ENCODE measurements at regions of chr9 and their contacts with region 1.

Region 1: DNA sequence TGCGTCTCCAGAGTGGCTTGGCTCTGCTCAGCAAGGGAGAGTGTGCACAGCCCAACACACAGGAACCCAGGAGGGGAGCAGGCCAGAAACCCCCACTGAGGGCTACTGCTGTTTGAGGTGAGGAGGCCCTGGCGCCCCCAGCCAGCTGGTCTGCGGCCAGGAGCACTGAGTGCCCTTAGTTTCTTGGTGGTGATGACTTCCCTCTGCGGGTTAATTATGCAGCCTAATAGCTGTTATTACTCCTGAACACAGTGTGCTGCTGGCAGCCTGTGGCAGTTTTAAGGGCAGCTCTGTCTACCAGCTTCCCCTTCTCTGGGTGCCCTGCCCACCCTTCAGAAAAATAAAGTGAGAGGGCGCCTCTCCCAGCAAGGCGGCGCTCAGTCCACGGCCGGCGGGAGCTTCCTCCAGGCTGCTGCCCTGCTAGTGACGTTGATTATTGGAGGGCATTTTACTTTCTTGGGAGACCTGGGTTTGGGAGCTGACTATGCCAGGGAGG is 19.2 kb downstream of the GADD45G start:
- DNase-seq: peak; percentile 83
- ATAC-seq: peak; percentile 80

Region 2: DNA sequence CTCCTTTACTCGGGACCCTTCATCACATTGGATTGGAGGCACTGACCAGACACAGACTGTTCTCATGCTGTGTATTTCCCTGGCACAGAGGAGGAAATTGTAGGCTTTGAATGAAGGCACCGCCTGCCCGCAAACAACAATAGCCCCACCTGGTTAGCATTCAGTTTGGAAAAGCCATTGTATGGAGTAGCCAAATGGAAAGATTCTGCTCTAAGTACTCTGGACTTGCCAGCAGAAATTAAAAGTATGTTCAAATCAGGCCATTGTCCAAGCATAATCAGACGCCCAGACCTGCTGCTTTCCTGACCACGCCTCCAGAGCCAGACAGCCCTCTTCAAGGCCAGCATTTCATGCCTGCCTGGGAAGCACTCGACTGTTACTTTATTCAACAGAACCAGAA is 118.1 kb before region 1 on chr9:
- intact Hi-C with region 1: no loop called
- DNase-seq: no peak
- ATAC-seq: no peak

Region 3: GRCh38 chr9:89579741-89580385 is 44.1 kb before region 1 on chr9:
- intact Hi-C with region 1: no loop called
- DNase-seq: peak; percentile 71
- ATAC-seq: no peak

Region 4: DNA sequence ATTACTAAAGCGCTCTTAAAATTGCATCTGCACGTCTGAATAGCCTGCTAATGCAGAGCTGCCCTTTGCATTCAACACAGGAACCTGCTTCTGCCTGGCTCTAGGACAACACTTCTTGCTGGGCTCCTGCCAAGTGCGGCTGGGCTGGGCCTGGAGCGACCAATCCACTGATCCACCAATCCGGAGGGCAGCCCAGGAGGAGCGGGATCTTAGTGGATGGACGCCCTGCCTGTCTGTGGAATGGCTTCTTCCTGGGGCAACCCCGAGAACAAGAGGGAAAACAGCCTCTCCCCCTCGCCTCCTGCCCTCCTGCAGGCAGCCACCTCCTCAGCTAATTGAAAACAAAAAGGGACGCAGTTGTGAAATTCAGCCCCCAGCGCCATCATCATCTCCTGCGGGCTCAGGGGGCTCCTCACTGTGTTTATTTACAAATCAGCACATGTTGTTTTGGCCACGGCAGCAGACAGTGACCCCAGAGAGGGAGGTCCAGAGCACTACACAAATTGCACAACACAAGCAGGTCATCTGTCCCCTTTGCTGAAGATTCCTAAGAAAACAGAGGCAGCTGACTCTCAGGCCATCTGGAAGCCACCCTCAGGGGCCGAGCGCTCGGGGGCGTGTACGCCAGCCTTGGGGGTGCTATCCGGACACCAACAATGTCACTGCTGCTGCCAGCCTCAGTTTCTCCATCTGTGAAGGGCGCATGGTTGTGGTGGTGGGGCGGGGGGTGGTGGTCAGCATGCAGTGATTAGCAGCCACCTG is 38.2 kb after region 1 on chr9:
- intact Hi-C with region 1: loop called (anchors 5 kb)
- DNase-seq: peak; percentile 97
- ATAC-seq: peak; percentile 93

Region 5: DNA sequence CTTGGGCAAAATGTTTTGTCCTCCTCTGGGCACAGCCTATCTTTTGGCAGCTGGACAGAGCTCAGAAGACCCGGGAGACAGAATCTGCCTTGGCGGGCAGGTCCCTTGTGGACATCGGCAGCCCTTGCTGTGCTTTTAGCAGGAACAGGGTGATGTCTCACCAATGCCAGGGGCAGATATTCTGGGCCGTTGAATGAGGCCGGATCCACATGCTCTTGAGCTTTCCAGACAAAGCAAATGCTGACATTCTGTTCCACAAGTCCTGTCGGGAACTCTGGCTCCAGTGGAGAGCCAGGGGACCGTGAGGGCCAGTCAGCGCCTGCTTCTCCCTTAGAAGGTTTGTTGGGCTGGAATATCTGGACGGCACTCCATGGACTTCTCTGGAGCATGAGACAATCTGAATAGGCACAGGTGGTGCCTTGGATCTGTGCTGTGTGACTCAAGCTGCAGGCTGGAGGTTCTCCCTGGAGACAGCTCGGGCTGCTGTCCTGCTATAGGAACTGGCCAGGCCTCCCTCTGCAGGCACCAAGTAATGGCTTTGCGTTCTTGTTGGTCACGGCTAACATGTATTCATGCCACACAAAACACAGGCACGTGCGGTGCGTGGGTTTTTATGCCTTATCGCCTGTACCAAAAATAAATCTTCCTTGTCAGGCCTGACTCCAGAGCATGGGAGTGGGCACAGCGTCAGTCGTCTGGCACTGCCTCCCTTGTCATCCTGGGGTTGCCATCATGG is 61.1 kb after region 1 on chr9:
- intact Hi-C with region 1: loop called (anchors 2 kb)
- DNase-seq: peak; percentile 82
- ATAC-seq: peak; percentile 90

Region 6: DNA sequence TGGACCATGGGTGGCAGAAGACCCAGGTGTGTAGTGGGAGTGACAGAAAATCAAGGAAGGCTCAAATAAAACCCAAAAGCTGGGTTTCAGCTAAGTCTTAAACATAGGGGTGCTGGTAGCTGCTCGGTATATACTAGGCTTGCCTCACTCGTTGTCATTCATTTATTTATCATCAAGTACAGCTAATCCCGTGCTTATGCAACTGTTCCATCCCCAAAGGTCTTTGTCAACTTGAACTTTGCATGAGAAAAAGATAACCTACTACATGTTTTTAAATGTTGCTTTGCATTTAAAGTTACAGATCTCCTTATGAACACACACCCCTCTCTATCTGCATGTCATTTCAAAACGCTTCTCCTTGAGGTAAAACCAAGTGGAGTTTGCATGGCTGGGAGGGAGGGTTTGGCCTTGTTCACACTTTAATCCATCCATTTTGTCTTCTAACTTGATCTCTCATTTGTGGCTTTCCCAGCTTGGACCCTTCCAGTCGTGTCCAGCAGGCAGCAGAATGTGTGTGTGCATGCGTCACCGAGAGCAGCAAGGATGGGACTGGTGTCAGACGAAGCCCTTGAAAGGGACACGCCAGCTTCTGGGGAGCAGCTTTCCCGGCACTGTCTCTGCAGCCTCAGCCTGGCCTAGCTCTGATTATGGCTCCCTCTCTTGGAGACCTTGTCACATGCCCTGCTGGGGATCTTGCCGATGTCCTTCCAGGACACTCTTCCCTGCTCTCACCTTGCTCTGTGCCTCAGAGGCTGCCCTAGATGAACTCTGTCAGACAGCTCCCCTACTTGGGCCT is 114.4 kb after region 1 on chr9:
- intact Hi-C with region 1: loop called (anchors 5 kb)
- DNase-seq: no peak
- ATAC-seq: peak; percentile 43

Region 7: GRCh38 chr9:89755821-89756220 is 131.8 kb after region 1 on chr9:
- intact Hi-C with region 1: loop called (anchors 5 kb)
- DNase-seq: no peak
- ATAC-seq: peak; percentile 45

Region 8: DNA sequence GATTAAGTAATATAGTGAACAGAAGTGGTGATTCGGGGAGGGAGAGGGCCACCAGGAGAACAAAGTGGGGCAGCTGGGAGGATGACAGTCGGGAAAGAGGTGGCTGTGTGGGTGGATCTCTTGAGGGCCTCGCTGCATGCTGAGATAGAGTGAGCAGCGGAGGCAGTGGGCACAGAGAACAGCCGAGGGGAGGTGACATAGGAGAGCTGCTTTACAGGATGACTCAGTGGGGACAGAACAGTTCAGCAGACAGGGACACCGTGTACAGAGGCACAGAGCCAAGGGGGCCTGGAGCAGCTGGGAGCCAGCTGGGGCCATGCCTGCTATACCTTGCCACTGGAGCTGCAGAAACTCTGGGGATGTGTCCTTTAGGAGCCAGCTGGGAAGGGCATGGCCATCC is 254.7 kb after region 1 on chr9:
- intact Hi-C with region 1: loop called (anchors 5 kb)
- DNase-seq: peak; percentile 81
- ATAC-seq: peak; percentile 86

Region 9: GRCh38 chr9:89999534-90000370 is 375.8 kb after region 1 on chr9:
- intact Hi-C with region 1: loop called (anchors 5 kb)
- DNase-seq: peak; percentile 80
- ATAC-seq: peak; percentile 88

Measured in Right ventricle myocardium inferior (tissue), 1 donor.